Spleen (tissue), 13 donors: ENCODE measurements at regions of chr21 and their contacts with region 1.

Region 1: GRCh38 chr21:43810505-43811261 is 21.3 kb downstream of the RRP1 start:
- DNase-seq: peak; percentile 96
- H3K4me3 ChIP-seq: peak overlapping the region in 4 of 8 donors; percentile 6 to 54 (median 20)
- H3K27ac ChIP-seq: peak overlapping the region in 5 of 8 donors; percentile 52 to 77 (median 66)
- H3K4me1 ChIP-seq: peaks cover 14 to 75% (median 51%) of the 10 kb centered on the region in 6 donors
- H3K27me3 ChIP-seq: no peaks in the 10 kb centered on the region
- CTCF ChIP-seq: peak; percentile 94 to 98 (median 96)
- POLR2A ChIP-seq: no peak

Region 2: DNA sequence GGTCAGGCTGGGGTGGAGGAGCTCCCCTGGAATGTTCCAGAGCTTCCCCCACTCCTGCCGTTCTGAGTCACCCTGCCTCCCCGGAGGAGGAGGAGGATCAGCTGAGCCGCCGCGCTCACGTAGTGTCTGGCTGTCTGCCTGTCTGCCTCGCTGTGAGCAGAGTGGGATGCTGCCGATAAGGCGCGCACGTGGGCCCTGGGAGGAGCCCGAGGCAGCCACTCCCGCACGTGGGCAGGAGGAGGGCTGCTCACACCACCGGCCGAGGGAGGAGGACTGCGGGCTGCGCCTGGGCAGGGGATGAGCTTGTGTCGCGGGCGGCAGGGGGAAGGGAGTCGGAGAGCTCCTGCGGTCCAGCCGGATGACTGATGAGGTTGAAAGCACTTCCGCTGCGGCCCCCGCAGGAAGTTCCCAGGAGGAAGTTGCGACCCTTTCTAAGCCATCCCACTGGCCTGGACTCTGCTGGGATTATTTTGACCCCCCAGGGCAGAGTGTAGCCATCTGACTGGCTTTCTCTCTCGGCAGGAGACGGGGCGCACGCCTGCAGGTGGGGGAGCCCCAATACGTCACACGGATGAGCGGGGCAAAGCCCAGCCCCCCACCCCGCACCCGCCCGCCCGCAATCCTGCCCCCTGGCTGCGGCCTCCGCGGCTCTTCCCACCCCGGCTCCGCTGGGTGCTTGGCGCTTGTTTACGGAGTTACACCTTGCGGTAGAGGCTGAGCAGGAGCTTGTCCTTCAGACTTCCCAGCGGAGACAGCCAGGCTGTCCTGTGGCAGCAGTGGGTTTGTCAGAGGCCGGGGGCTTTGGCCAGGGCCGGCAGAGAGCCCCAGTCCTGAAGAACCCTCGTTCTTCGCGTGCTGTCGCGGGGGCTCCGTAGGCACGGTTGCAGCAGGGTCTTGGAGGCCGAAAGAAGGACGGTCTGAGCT is 82.0 kb before region 1 on chr21:
- intact Hi-C with region 1: no loop called
- DNase-seq: peak; percentile 94
- H3K4me3 ChIP-seq: peak overlapping the region; percentile 38 to 71 (median 48)
- H3K27ac ChIP-seq: peak overlapping the region; percentile 72 to 88 (median 80)
- H3K4me1 ChIP-seq: peaks cover 35 to 100% (median 73%) of the 10 kb centered on the region in 6 donors
- H3K27me3 ChIP-seq: no peaks in the 10 kb centered on the region
- CTCF ChIP-seq: peak in 5 of 11 experiments; percentile 30 to 54 (median 39)
- POLR2A ChIP-seq: peak in 1 of 3 donors; percentile 24

Region 3: DNA sequence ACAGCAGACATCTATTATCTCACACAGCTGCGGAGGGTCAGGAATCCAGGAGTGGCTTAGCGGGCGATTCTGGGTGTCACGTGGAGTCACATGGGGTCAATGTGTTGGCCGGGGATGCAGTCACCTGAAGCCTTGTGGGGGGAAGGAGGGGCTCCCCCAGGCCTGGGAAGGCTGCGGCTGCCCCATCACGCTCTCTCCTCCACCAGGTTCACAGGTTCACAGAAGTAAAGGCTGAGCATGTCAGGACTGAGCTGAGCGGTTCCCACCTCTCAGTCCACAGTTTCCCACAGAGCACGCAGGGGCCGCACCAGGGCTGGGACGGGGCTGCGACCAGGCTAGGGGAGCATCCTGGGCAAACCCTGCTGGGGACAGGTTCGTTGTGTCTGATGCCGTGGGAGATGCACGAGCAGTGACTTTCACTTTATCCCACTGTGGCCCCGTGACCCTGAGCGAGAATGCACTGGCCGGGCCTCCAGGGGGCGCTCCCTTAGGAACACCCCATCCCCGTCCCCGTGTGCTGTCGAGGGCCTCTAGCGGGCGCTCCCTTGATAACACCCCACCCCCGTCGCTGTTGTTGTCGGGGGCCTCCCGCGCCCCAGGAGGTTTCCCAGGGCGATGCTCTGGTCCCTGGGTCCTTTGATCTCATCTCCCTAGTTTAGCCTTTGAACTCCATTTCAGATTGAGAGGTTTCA is 128.2 kb after region 1 on chr21:
- intact Hi-C with region 1: loop called (anchors 10 kb)
- DNase-seq: peak; percentile 92
- H3K4me3 ChIP-seq: peak overlapping the region in 6 of 8 donors; percentile 34 to 75 (median 43)
- H3K27ac ChIP-seq: peak overlapping the region in 6 of 8 donors; percentile 26 to 78 (median 48)
- H3K4me1 ChIP-seq: peaks cover 0 to 57% (median 43%) of the 10 kb centered on the region in 6 donors
- H3K27me3 ChIP-seq: no peaks in the 10 kb centered on the region
- CTCF ChIP-seq: peak; percentile 75 to 99 (median 97)
- POLR2A ChIP-seq: no peak